Activated CD4-positive, alpha-beta T cell treated with anti-CD3 and anti-CD28 coated beads, Interleukin-2, amount 10 ng/mL, durations not matched to agents 24 days and 14 days (primary cell): ENCODE measurements at regions of chr12 and their contacts with region 1.

Region 1: GRCh38 chr12:14216405-14217294 is 148.8 kb upstream of the ATF7IP start:
- DNase-seq: no peak
- H3K4me3 Mint-ChIP-seq: peak overlapping the region; percentile 23
- H3K27ac Mint-ChIP-seq: no peak overlapping the region
- H3K4me1 Mint-ChIP-seq: peaks cover 13% of the 10 kb centered on the region
- H3K27me3 Mint-ChIP-seq: no peaks in the 10 kb centered on the region

Region 2: DNA sequence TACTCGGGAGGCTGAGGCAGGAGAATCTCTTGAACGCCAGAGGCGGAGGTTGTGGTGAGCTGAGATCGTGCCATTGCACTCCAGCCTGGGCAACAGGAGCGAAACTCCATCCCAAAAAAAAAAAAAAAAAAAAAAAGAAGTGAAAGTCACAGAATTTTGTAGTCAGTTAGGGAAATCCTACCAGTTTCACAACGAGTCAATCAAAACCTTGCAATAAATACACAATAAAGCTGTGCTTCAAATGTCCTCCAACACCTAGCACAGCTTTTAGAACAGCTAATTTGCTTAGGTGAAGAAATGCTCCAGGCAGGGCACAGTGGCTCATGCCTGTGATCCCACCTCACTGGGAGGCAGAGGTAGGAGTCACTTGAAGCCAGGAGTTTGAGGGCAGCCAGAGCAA is 36.0 kb after region 1 on chr12:
- intact Hi-C with region 1: loop called (anchors 1 kb)
- DNase-seq: no peak
- H3K4me3 Mint-ChIP-seq: peak overlapping the region; percentile 40
- H3K27ac Mint-ChIP-seq: peak overlapping the region; percentile 79
- H3K4me1 Mint-ChIP-seq: peaks cover 35% of the 10 kb centered on the region
- H3K27me3 Mint-ChIP-seq: no peaks in the 10 kb centered on the region